ENCODE measurements at regions of chr2 and their contacts with region 1.

Region 1: DNA sequence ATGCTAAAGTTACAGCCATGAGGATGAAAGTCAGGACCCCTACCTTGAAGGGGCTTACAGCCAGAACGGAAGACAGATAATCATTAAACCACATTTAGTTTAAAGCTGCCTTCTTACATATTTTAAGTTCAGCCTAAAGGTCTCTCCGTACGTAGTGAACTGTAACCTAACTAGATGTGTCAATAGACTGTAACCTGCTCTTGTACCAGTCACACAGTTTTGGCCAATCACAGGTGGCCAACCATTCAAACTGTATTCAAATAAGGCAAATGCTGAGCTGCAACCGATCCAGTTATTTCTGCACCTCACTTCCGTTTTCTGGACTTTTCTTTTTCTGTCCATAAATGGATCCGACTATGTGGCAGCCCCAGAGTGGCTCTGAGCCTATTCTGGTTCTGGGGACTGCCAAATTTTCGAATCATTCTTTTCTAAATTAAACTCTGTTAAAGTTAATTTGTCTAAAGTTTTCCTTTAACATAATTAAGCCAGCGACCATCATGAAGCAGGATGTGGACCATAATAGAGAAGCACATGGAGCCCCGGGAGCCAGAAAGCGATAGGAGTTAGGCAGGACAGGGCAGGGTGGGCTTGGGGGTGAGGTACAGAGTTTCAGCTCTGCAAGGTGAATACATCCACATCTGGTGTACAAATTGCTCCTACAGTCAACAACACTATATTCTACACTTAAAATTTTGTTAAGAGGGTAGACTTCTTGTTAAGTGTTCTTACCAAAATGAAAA is 48.4 kb upstream of the YPEL5 start:
- DNase-seq: no peak
- ATAC-seq: no peak
- H3K4me3 ChIP-seq: no peak overlapping the region
- H3K27ac ChIP-seq: no peak overlapping the region
- H3K4me1 ChIP-seq: no peaks in the 10 kb centered on the region
- H3K27me3 ChIP-seq: peaks cover 0 to 57% (median 34%) of the 10 kb centered on the region in 7 donors
- CTCF ChIP-seq: no peak

Region 2: DNA sequence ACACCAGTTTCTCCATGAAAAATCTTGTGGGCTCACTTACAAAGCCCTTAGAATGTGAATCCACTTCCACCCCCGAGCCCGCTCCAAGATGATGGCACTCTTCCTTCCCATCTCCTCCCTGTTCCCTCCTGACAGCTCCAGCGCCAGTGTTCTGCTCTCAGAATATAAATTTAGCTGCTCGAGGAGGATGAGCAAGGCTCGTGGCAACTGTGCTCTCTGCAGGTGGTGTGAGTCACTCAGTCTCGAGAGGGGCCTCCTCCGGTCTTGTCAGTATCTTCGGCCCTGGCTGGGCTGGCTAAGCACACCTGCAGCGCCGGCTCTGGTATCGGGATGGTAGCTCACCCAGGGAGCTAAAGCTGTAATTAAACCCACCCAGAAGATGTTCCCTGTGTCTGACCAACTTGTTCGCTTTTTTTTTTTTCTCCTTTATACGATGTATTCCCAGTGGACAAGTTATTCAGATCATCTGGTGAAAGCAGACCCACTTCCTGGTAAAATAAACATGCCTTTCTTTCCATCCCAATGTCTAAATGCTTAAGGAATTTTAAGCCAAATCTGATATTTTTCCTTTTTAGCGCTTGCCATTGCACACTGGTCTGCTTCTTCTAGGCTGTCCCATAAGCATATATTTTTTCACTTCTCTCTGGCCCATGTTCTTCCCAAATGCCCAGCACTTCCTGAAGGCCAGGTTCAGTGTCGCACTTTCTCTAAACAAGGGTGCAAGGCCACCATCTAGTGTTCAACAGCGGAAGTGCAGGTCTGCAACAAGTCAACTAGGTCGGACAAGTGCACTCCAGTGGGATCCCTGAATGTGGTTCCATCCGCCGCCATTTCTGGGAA is 16.9 kb after region 1 on chr2:
- intact Hi-C with region 1: loop called in 1 of 10 experiments (anchors 2 kb)
- DNase-seq: peak; percentile 72 to 82
- ATAC-seq: peak; percentile 77 to 88 (median 82)
- H3K4me3 ChIP-seq: no peak overlapping the region
- H3K27ac ChIP-seq: no peak overlapping the region
- H3K4me1 ChIP-seq: peaks cover 0 to 8% (median 0%) of the 10 kb centered on the region in 9 donors
- H3K27me3 ChIP-seq: peaks cover 0 to 2% (median 0%) of the 10 kb centered on the region in 7 donors
- CTCF ChIP-seq: peak; percentile 74 to 95 (median 91)

Measured in heart right ventricle (tissue), 16 donors.